Esophagus squamous epithelium (tissue), 5 donors: ENCODE measurements at regions of chr19 and their contacts with region 1.

Region 1: GRCh38 chr19:57362997-57363705 is at the starts of genes TRAPPC2B and ZNF547:
- DNase-seq: peak; percentile 90
- H3K4me3 ChIP-seq: peak within 1 kb of the TSS; percentile 69 to 98 (median 82)
- H3K27ac ChIP-seq: peak within 1 kb of the TSS; percentile 94 to 99 (median 95)
- H3K4me1 ChIP-seq: peaks cover 6 to 28% (median 9%) of the 10 kb centered on the region in 3 donors
- H3K27me3 ChIP-seq: no peaks in the 10 kb centered on the region
- CTCF ChIP-seq: peak in 1 of 6 experiments; percentile 14
- POLR2A ChIP-seq: peak in 3 of 4 donors; percentile 5 to 67 (median 56)
- total RNA-seq, gene TRAPPC2B: 14.7 to 24.6 (median 17.9) TPM
- total RNA-seq, gene ZNF547: 1.1 to 6.7 (median 3.1) TPM

Region 2: GRCh38 chr19:57443120-57443696 is 80.1 kb after region 1 on chr19:
- intact Hi-C with region 1: no loop called
- DNase-seq: no peak
- H3K4me3 ChIP-seq: no peak overlapping the region
- H3K27ac ChIP-seq: no peak overlapping the region
- H3K4me1 ChIP-seq: no peaks in the 10 kb centered on the region
- H3K27me3 ChIP-seq: no peaks in the 10 kb centered on the region
- CTCF ChIP-seq: no peak
- POLR2A ChIP-seq: no peak

Region 3: DNA sequence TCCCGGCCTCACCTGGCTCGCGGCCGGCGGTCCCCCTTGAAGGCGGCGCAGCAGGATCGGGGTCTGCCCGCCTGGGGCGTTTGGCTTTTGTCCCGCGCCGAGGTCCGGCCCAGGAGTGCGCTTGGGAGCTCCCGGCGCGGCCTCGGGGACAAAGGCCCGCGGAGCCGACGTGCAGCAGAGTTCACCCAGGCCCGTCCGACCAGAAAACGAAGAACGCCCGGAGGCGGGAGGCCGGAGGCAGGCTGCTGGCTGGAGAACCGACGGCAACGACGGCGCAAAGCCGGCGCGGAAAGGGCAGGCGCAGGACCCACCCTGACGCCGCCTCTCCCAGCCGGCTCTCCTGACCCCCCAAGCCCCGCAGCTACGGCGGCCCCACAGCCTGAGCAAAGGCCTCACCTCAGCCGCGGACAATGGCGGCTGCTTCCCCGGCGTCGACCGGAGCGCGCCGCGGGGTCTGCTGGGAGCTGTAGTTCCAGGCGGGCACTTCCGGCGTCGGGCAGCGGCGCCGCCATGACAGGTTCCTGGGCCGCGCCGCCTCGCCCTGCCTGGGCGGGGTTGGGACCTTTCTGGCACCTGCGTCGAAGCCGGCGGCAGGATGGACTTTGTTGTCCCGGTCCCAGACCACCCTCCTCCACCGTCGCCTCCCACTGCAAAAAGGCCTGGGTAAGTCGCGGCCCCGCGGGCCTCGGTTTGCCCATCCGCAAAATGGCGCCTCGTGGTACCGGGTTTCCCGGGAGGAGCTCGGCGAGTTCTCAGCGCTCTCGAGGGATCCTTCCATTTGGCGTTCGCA is 639.4 kb after region 1 on chr19 and contains the start of gene ZNF606:
- intact Hi-C with region 1: loop called (anchors 10 kb)
- DNase-seq: peak; percentile 18
- H3K4me3 ChIP-seq: peak within 1 kb of the TSS; percentile 72 to 99 (median 90)
- H3K27ac ChIP-seq: peak within 1 kb of the TSS; percentile 94 to 98 (median 95)
- H3K4me1 ChIP-seq: peaks cover 6 to 37% (median 10%) of the 10 kb centered on the region in 3 donors
- H3K27me3 ChIP-seq: no peaks in the 10 kb centered on the region
- CTCF ChIP-seq: peak in 1 of 6 experiments; percentile 21
- POLR2A ChIP-seq: peak in 2 of 4 donors; percentile 62 to 78
- total RNA-seq, gene ZNF606: 7.2 to 13.0 (median 8.1) TPM